B cell (primary cell): ENCODE measurements at regions of chr1 and their contacts with region 1.

Region 1: DNA sequence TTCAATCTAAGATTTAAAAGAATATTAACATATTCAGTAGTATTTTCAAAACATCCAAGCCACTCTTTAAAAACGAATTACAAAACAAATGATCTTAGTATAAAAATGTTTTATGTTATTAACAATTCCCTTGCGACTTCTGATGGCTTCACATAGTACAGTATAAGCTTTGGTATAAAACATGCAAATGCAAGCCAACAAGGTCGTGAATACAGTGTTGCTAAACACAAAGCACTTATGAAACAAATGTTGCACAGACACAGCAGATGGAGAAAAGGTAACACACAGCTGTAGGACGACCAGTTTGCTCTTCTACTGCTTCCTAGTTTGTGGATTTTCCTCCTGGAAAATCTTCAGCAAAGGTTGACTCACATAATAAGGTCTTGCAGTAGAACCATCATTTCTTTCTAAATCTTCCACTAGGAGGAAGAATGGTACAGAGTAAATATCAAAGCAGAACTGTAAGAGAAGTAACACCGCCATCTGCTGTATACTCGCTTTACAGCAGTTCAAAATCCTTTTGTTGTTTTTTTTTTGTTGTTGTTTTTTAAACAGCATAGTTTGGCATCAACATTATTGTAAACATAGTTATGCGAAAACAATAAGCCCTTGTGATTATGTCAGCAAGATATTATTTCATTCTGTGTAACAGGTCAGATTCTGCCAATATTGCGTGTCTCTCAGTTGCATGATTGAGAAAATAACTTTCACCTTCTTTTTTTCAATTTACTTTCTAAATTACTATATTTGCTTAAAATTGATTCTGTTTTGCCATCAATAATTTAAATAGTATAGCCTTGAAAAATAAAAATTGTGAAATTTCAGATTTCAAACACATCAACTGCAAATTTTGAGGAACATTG is 69.5 kb downstream of the LHX8 start:
- DNase-seq: peak; percentile 20
- ATAC-seq: peak; percentile 17
- H3K4me3 ChIP-seq: no peak overlapping the region
- H3K4me3 Mint-ChIP-seq: no peak overlapping the region
- H3K27ac ChIP-seq: no peak overlapping the region
- H3K27ac Mint-ChIP-seq: no peak overlapping the region
- H3K4me1 ChIP-seq: no peaks in the 10 kb centered on the region
- H3K4me1 Mint-ChIP-seq: no peaks in the 10 kb centered on the region
- H3K27me3 ChIP-seq: no peaks in the 10 kb centered on the region
- H3K27me3 Mint-ChIP-seq: no peaks in the 10 kb centered on the region
- CTCF ChIP-seq: peak; percentile 69

Region 2: DNA sequence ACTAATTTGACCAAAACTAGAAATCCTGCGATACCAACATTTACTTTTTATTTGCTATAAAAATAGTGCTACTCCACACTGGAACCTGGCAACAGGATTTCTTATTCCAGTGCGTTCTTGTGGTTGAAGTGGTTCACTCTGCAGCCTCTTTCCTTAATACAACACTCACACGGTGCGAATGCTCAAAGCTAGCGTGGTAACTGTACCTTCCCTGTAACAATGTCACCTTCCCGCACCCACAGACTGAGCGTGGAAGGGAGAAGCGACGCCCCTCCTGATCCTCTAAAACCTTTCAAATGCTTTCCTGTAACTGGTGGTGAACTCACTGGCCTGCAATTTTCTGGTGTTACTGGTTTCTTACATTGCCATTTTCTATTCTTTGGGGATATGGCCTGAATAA is 823.4 kb before region 1 on chr1:
- CTCF ChIA-PET with region 1: no interaction called
- POLR2A ChIA-PET with region 1: no interaction called
- intact Hi-C with region 1: no loop called
- DNase-seq: no peak
- ATAC-seq: no peak
- H3K4me3 ChIP-seq: no peak overlapping the region
- H3K4me3 Mint-ChIP-seq: no peak overlapping the region
- H3K27ac ChIP-seq: no peak overlapping the region
- H3K27ac Mint-ChIP-seq: no peak overlapping the region
- H3K4me1 ChIP-seq: no peaks in the 10 kb centered on the region
- H3K4me1 Mint-ChIP-seq: no peaks in the 10 kb centered on the region
- H3K27me3 ChIP-seq: no peaks in the 10 kb centered on the region
- H3K27me3 Mint-ChIP-seq: no peaks in the 10 kb centered on the region
- CTCF ChIP-seq: no peak

Region 3: GRCh38 chr1:74771913-74772515 is 431.6 kb before region 1 on chr1:
- CTCF ChIA-PET with region 1: interaction called, 16 read pairs
- POLR2A ChIA-PET with region 1: no interaction called
- intact Hi-C with region 1: no loop called
- DNase-seq: peak; percentile 42
- ATAC-seq: no peak
- H3K4me3 ChIP-seq: no peak overlapping the region
- H3K4me3 Mint-ChIP-seq: no peak overlapping the region
- H3K27ac ChIP-seq: no peak overlapping the region
- H3K27ac Mint-ChIP-seq: no peak overlapping the region
- H3K4me1 ChIP-seq: no peaks in the 10 kb centered on the region
- H3K4me1 Mint-ChIP-seq: peaks cover 2% of the 10 kb centered on the region
- H3K27me3 ChIP-seq: peaks cover 0 to 6% (median 0%) of the 10 kb centered on the region in 4 experiments
- H3K27me3 Mint-ChIP-seq: peaks cover 8% of the 10 kb centered on the region
- CTCF ChIP-seq: peak; percentile 81

Region 4: DNA sequence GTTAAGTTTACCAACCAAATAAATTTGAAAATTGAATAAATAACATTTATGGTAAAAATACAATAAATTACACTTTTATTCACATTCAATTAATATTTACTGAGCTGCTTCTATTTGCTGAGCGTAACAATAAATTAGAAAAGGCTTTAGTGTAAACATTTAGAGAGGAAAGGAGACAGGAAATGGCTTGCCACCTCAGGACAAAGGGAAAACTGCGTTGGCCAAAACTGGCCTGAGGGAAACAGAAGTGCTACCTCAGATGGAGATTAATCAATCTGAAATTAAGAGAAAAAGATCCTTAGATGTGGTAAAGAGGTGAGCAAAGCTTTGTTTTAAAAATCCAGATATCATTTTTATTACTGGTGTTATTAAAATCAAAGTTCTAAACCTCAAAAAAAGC is 279.3 kb after region 1 on chr1:
- CTCF ChIA-PET with region 1: no interaction called
- POLR2A ChIA-PET with region 1: no interaction called
- intact Hi-C with region 1: no loop called
- DNase-seq: no peak
- ATAC-seq: no peak
- H3K4me3 ChIP-seq: no peak overlapping the region
- H3K4me3 Mint-ChIP-seq: no peak overlapping the region
- H3K27ac ChIP-seq: no peak overlapping the region
- H3K27ac Mint-ChIP-seq: no peak overlapping the region
- H3K4me1 ChIP-seq: no peaks in the 10 kb centered on the region
- H3K4me1 Mint-ChIP-seq: no peaks in the 10 kb centered on the region
- H3K27me3 ChIP-seq: no peaks in the 10 kb centered on the region
- H3K27me3 Mint-ChIP-seq: no peaks in the 10 kb centered on the region
- CTCF ChIP-seq: no peak